ENCODE measurements at regions of chr1 and their contacts with region 1.

Region 1: DNA sequence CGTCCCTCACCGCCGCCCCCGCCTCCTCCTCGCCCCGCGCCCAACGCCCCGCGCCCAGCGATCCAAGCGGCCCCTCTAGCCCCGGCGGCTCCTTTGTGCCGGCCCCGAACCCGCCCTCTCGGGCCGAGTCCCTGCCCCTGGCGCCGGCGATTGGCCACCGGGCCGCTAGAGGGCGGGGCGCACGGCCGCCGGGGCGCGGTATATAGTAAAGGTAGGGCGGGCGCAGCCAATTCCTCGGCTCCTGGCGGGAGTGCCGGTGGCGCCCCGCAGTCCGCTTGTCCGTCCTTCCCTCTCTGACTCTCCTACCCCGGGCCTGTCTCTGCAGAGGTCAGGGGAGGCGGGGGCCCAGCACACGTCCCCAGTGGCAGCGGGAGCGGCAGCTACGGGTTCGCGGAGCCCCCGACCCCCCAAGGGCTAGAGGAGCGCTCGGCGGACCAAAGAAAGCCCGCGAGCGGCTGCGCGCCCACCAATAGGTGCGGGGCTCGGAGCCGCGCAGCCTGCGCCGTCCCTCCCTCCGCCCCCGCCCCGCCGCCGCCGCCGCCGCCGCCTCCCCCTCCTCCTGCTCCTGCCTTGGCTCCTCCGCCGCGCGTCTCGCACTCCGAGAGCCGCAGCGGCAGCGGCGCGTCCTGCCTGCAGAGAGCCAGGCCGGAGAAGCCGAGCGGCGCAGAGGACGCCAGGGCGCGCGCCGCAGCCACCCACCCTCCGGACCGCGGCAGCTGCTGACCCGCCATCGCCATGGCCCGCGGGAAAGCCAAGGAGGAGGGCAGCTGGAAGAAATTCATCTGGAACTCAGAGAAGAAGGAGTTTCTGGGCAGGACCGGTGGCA is at the start of gene ATP1B1:
- DNase-seq: peak; percentile 92
- total RNA-seq, gene ATP1B1: 256 TPM

Region 2: GRCh38 chr1:168637350-168637991 is 468.8 kb before region 1 on chr1:
- intact Hi-C with region 1: loop called (anchors 2 kb)
- DNase-seq: no peak

Region 3: GRCh38 chr1:168763031-168763430 is 343.3 kb before region 1 on chr1:
- intact Hi-C with region 1: loop called (anchors 5 kb)
- DNase-seq: no peak

Region 4: DNA sequence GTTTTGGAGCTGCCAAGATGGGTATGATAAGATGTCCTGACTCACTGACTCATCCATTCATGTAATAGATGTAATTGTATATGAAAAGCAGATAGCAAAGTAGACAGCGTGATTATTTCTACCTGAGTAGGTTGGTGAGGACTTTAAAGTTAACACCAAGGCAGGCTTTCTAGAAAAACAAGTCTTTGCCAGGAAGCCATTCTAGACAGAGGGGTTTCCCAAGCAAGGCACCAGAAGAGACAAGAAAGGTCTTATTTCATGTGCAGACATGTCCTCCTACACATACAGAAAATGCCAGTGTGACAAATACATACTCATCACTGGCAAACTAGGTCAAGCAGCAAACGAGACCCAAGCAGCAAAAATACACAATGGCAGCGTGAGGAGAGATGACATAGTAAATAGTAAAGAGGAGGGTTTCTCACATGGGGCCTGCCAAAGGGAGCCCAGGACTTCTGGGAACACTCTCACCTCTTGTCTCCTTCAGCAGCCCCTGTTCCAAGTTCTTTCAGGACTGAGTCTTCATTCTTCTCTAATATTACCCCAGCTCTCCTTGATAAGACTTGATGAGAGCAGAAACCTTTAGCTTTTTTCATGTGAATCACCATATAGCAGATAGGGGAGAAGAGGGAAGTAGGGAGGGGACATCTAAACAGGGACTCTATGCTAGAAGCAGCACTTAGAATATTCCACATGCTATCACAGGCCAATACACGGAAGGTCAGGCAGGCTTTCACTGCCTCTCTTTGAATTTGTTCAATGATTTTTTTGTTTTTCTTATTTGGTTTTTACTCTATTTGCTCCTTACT is 114.4 kb before region 1 on chr1:
- intact Hi-C with region 1: no loop called
- DNase-seq: no peak

Region 5: GRCh38 chr1:169044296-169044695 is 62.0 kb before region 1 on chr1:
- intact Hi-C with region 1: loop called (anchors 5 kb)
- DNase-seq: no peak